ENCODE measurements at regions of chr15 and their contacts with region 1.

Region 1: DNA sequence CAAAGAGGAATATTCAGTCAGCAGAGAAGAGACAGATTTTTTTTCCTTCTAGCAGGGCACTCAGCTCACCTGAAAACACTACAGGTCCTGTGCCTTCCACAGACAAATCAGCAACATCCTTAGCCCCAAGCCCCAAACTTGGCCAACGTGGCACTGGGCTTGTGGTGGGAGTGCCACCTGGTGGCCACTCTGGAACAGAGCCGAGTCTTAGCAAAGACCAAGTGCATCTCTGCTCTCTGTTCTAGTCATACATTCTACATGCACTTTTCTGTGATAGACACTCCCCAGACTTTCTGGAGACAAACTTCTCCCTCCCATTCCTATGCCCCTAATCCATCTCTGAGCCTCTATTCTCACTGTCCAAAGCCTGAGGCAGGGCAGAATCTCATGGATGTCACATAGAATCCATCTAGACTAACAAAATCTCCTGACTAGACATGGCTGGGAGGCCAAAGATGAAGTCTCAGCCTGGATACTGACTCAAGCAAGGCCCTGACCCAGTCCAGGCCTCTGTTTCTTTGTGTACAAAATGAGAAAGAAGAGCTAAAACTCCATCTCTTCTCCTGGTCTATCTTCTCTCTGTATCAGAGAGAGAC is 5.1 kb upstream of the SEMA7A start:
- DNase-seq: peak; percentile 78
- ATAC-seq: peak; percentile 73 to 79
- H3K4me3 ChIP-seq: no peak overlapping the region
- H3K27ac ChIP-seq: no peak overlapping the region
- H3K4me1 ChIP-seq: peaks cover 10% of the 10 kb centered on the region
- H3K27me3 ChIP-seq: no peaks in the 10 kb centered on the region
- CTCF ChIP-seq: peak; percentile 89

Region 2: DNA sequence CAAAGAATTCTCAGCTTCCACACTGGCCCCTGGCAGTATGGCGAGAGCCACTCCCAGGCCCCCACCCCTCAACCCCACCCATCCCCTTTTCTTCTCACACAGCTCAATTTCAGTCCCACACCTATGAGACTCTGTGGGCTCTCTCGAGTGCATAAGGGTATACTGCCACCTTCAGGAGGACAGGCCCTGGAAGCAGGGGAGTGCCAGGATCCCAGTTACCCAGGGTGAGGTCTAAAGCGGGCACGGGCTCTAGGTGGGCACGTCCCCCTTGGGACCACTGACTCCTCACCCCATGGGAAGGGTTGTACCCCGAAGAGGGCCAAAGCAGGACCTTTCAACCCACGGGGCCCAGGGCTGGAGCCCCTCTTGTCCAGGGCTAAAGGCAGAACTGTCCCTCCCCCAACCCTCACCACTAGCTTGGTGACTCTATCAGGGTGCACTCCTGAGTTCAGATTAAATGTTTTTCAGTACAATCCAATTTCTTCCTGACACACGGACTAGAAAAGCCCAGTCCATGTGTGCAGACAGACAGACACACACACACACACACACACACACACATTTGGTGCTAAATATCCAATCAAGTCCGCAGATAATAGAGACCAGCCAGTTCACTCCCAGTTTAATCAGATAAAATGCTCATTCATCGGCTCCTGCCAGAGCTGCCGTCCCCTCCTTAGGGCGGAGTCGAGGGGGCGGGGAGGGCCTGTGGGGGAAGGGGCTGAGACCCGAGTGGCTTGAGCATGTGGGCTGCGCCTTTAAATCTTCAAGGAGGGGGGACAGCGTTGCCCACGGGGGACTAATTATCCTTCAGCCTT is 130.8 kb before region 1 on chr15:
- intact Hi-C with region 1: no loop called
- DNase-seq: no peak
- ATAC-seq: peak; percentile 52 to 69
- H3K4me3 ChIP-seq: no peak overlapping the region
- H3K27ac ChIP-seq: no peak overlapping the region
- H3K4me1 ChIP-seq: no peaks in the 10 kb centered on the region
- H3K27me3 ChIP-seq: peaks cover 55% of the 10 kb centered on the region
- CTCF ChIP-seq: peak; percentile 59

Region 3: GRCh38 chr15:74382004-74382816 is 56.6 kb before region 1 on chr15:
- intact Hi-C with region 1: loop called (anchors 5 kb)
- DNase-seq: peak; percentile 91
- ATAC-seq: peak; percentile 91 to 92
- H3K4me3 ChIP-seq: no peak overlapping the region
- H3K27ac ChIP-seq: no peak overlapping the region
- H3K4me1 ChIP-seq: peaks cover 39% of the 10 kb centered on the region
- H3K27me3 ChIP-seq: no peaks in the 10 kb centered on the region
- CTCF ChIP-seq: peak; percentile 98